ENCODE measurements at regions of chr7 and their contacts with region 1.

Region 1: GRCh38 chr7:55534175-55534915 is 38.0 kb downstream of the VOPP1 start:
- DNase-seq: peak; percentile 93
- H3K4me3 Mint-ChIP-seq: peak overlapping the region; percentile 67
- H3K27ac Mint-ChIP-seq: peak overlapping the region; percentile 97
- H3K4me1 Mint-ChIP-seq: peaks cover 97% of the 10 kb centered on the region
- H3K27me3 Mint-ChIP-seq: no peaks in the 10 kb centered on the region

Region 2: GRCh38 chr7:55309040-55309991 is 225.0 kb before region 1 on chr7:
- CTCF ChIA-PET with region 1: no interaction called
- intact Hi-C with region 1: loop called (anchors 1 kb)
- DNase-seq: peak; percentile 70
- H3K4me3 Mint-ChIP-seq: no peak overlapping the region
- H3K27ac Mint-ChIP-seq: no peak overlapping the region
- H3K4me1 Mint-ChIP-seq: peaks cover 10% of the 10 kb centered on the region
- H3K27me3 Mint-ChIP-seq: no peaks in the 10 kb centered on the region

Region 3: GRCh38 chr7:55493408-55493807 is 40.9 kb before region 1 on chr7:
- CTCF ChIA-PET with region 1: interaction called, 10 read pairs
- intact Hi-C with region 1: no loop called
- DNase-seq: peak; percentile 31
- H3K4me3 Mint-ChIP-seq: no peak overlapping the region
- H3K27ac Mint-ChIP-seq: no peak overlapping the region
- H3K4me1 Mint-ChIP-seq: peaks cover 39% of the 10 kb centered on the region
- H3K27me3 Mint-ChIP-seq: no peaks in the 10 kb centered on the region

Region 4: GRCh38 chr7:55546829-55547228 is 12.5 kb after region 1 on chr7:
- CTCF ChIA-PET with region 1: interaction called, 10 read pairs
- intact Hi-C with region 1: loop called (anchors 1 kb)
- DNase-seq: peak; percentile 78
- H3K4me3 Mint-ChIP-seq: no peak overlapping the region
- H3K27ac Mint-ChIP-seq: no peak overlapping the region
- H3K4me1 Mint-ChIP-seq: peaks cover 77% of the 10 kb centered on the region
- H3K27me3 Mint-ChIP-seq: no peaks in the 10 kb centered on the region

Region 5: GRCh38 chr7:55593515-55594318 is 59.4 kb after region 1 on chr7:
- CTCF ChIA-PET with region 1: interaction called, 6 read pairs
- intact Hi-C with region 1: loop called (anchors 2 kb)
- DNase-seq: peak; percentile 87
- H3K4me3 Mint-ChIP-seq: no peak overlapping the region
- H3K27ac Mint-ChIP-seq: no peak overlapping the region
- H3K4me1 Mint-ChIP-seq: peaks cover 17% of the 10 kb centered on the region
- H3K27me3 Mint-ChIP-seq: peaks cover 2% of the 10 kb centered on the region

Region 6: GRCh38 chr7:56493196-56493595 is 958.9 kb after region 1 on chr7:
- CTCF ChIA-PET with region 1: no interaction called
- intact Hi-C with region 1: no loop called
- DNase-seq: no peak
- H3K4me3 Mint-ChIP-seq: no peak overlapping the region
- H3K27ac Mint-ChIP-seq: no peak overlapping the region
- H3K4me1 Mint-ChIP-seq: no peaks in the 10 kb centered on the region
- H3K27me3 Mint-ChIP-seq: no peaks in the 10 kb centered on the region